ENCODE measurements at regions of chr3 and their contacts with region 1.

Region 1: GRCh38 chr3:118817748-118818165 is 216.9 kb downstream of the IGSF11 start:
- DNase-seq: peak; percentile 49
- CTCF ChIP-seq: peak; percentile 75

Region 2: GRCh38 chr3:118636841-118637240 is 180.9 kb before region 1 on chr3:
- in situ Hi-C with region 1: loop called (anchors 10 kb)
- DNase-seq: no peak
- CTCF ChIP-seq: no peak

Region 3: DNA sequence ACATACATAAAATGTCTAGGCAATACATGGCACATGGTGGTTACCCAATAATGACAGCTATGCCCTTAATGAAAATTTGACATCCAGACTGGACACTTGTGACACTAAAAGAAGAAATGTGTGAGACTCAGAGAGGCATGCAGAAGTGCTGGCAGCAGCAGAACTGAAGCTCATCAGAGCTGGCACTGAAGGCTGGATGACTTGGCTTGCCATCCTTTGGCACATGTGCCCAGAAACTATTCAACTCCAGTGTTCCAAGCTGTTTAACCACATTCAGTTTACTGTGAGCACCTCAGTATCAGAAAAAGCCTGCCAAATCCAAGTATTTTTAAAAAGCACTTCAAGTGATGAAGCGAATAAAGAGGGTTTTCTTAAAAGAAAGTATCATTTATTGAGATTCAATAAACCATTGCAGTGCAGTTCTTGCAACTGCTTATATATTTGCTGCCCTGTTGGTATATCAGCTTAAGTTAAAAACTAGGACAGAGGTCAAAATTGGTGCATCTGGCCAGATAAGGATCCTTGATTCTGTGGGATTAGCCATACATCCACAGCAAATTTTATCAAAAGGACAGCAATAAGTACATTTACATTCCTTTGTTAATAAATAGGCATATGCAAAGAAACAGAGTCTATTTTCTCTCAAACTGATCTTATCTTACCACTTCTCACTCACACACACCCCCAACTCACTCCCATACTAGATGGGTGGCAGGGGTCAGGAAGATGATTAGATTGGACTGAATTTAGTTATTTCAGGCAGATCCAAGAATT is 201.1 kb after region 1 on chr3:
- in situ Hi-C with region 1: no loop called
- DNase-seq: no peak
- CTCF ChIP-seq: no peak

Region 4: DNA sequence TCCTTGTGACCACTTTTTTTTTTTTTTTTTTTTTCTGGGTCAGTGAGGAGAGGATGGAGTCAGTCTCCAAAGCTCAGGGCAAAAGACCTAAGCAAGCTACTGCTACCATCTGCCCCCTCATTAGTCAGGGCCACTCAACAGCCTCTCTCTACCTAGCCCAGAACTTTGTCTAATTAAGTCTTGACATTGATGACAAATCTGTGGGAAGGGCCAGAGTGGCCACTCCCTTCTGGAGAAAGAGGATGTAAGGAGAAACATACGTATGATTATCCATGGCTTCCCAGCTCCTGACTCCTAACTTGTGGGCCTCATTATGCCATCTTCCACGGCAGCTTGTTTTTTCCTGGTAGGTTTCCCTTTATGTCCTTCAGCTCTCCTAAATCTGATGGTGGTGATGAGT is 1002.0 kb after region 1 on chr3:
- in situ Hi-C with region 1: no loop called
- DNase-seq: no peak
- CTCF ChIP-seq: no peak